Activated naive CD4-positive, alpha-beta T cell treated with anti-CD3 and anti-CD28 coated beads for 36 hours (primary cell): ENCODE measurements at regions of chr20 and their contacts with region 1.

Region 1: DNA sequence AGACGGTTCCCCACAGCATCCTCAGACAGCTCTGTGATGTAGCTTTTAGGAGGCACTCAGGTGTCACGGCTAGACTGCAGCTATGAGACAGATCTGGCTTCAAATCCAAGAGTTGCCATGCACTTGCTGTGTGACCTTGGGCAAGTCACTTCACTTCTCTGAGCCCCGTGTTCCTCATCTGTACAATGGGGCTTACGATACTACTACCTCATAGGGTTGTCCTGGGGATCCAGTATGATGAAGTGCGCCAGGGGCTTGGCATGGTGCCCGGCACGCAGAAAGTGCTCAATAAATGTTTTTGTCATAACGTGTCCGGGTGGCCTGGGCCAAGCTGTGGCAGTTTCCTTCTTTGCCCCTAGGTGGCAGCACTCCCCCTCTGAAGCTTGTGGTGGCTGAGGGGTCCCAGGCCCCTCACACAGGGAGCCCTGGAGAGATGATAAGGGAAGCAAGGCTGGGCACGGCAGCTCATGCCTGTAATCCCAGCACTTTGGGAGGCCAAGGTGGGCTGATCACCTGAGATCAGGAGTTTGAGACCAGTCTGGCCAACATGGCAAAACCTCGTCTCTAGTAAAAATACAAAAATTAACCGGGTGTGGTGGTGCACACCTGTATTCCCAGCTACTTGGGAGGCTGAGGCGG is 19.1 kb upstream of the CHMP4B start:
- DNase-seq: peak; percentile 60
- H3K4me3 Mint-ChIP-seq: no peak overlapping the region
- H3K27ac Mint-ChIP-seq: no peak overlapping the region
- H3K4me1 Mint-ChIP-seq: no peaks in the 10 kb centered on the region
- H3K27me3 Mint-ChIP-seq: no peaks in the 10 kb centered on the region

Region 2: GRCh38 chr20:33666293-33667244 is 125.5 kb before region 1 on chr20 and contains the start of gene ACTL10:
- CTCF ChIA-PET with region 1: no interaction called
- intact Hi-C with region 1: no loop called
- DNase-seq: peak; percentile 87
- H3K4me3 Mint-ChIP-seq: peak within 1 kb of the TSS; percentile 80
- H3K27ac Mint-ChIP-seq: peak within 1 kb of the TSS; percentile 94
- H3K4me1 Mint-ChIP-seq: peaks cover 31% of the 10 kb centered on the region
- H3K27me3 Mint-ChIP-seq: no peaks in the 10 kb centered on the region
- total RNA-seq, gene ACTL10: 0.96 to 1.0 TPM

Region 3: DNA sequence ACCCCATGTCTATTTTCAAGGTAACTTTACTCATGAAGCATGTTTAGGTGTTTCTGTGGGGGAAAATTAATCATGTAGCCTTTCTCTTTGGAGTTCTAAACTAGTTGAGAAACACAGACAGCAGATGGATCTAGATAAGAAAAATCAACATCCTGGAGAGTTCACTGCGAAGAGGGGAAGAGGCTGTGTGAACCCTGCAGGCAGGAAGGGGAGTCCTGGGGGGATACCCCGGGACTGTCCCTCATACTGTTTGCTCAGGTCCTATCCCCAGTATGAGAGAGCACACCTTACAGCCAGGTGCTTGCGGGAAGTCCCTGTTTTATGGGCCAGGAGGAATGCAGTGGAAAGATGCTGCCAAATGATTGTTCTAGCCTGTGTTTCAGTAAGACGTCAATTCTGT is 51.8 kb after region 1 on chr20:
- CTCF ChIA-PET with region 1: interaction called, 3 read pairs
- intact Hi-C with region 1: loop called (anchors 5 kb)
- DNase-seq: peak; percentile 71
- H3K4me3 Mint-ChIP-seq: no peak overlapping the region
- H3K27ac Mint-ChIP-seq: no peak overlapping the region
- H3K4me1 Mint-ChIP-seq: peaks cover 78% of the 10 kb centered on the region
- H3K27me3 Mint-ChIP-seq: no peaks in the 10 kb centered on the region

Region 4: GRCh38 chr20:33862709-33863403 is 70.8 kb after region 1 on chr20:
- CTCF ChIA-PET with region 1: interaction called, 10 read pairs
- intact Hi-C with region 1: no loop called
- DNase-seq: peak; percentile 57
- H3K4me3 Mint-ChIP-seq: no peak overlapping the region
- H3K27ac Mint-ChIP-seq: no peak overlapping the region
- H3K4me1 Mint-ChIP-seq: peaks cover 19% of the 10 kb centered on the region
- H3K27me3 Mint-ChIP-seq: no peaks in the 10 kb centered on the region

Region 5: GRCh38 chr20:33963751-33964150 is 171.7 kb after region 1 on chr20:
- CTCF ChIA-PET with region 1: no interaction called
- intact Hi-C with region 1: no loop called
- DNase-seq: no peak
- H3K4me3 Mint-ChIP-seq: no peak overlapping the region
- H3K27ac Mint-ChIP-seq: no peak overlapping the region
- H3K4me1 Mint-ChIP-seq: no peaks in the 10 kb centered on the region
- H3K27me3 Mint-ChIP-seq: no peaks in the 10 kb centered on the region